ENCODE measurements at regions of chr12 and their contacts with region 1.

Region 1: DNA sequence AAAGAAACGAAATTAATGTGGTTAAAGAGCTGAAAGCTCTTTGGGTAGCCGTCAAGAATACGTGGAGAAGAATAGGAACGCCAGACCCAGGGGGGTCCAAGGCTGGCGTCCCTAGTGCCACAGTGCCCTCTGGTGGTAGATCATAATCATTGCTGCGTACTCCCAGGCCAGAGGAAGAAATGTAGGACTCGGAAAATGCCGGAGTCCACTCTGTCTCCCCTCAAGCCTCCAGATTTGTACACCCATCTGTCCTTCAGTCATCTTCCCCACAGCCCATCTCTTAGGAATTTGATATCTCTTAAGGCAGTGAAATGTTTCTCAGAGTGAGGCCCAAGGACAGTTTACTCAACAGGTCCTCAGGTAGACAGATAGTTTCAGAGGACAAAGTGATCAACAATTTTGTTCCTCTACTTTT is 25.4 kb upstream of the PLEKHG6 start:
- DNase-seq: peak; percentile 71
- ATAC-seq: peak; percentile 92
- H3K4me3 Mint-ChIP-seq: no peak overlapping the region
- H3K27ac Mint-ChIP-seq: no peak overlapping the region
- H3K4me1 Mint-ChIP-seq: peaks cover 2% of the 10 kb centered on the region
- H3K27me3 Mint-ChIP-seq: peaks cover 23% of the 10 kb centered on the region

Region 2: GRCh38 chr12:6062757-6063735 is 222.0 kb before region 1 on chr12:
- CTCF ChIA-PET with region 1: interaction called, 16 read pairs
- DNase-seq: peak; percentile 61
- ATAC-seq: peak; percentile 72
- H3K4me3 Mint-ChIP-seq: no peak overlapping the region
- H3K27ac Mint-ChIP-seq: no peak overlapping the region
- H3K4me1 Mint-ChIP-seq: no peaks in the 10 kb centered on the region
- H3K27me3 Mint-ChIP-seq: peaks cover 14% of the 10 kb centered on the region

Region 3: GRCh38 chr12:6376079-6376869 is 91.2 kb after region 1 on chr12:
- CTCF ChIA-PET with region 1: no interaction called
- DNase-seq: no peak
- ATAC-seq: peak; percentile 61
- H3K4me3 Mint-ChIP-seq: peak overlapping the region; percentile 30
- H3K27ac Mint-ChIP-seq: peak overlapping the region; percentile 51
- H3K4me1 Mint-ChIP-seq: peaks cover 36% of the 10 kb centered on the region
- H3K27me3 Mint-ChIP-seq: peaks cover 14% of the 10 kb centered on the region

Measured in activated CD8-positive, alpha-beta memory T cell treated with anti-CD3 and anti-CD28 coated beads, Interleukin-2, amount 10 ng/mL, durations not matched to agents 7 days and 5 days (primary cell).